Aorta (tissue), 5 donors: ENCODE measurements at regions of chr19 and their contacts with region 1.

Region 1: GRCh38 chr19:47663841-47664771 is 49.1 kb upstream of the EHD2 start:
- DNase-seq: peak in 1 of 2 donors; percentile 86
- ATAC-seq: peak; percentile 90
- H3K4me3 ChIP-seq: no peak overlapping the region
- H3K27ac ChIP-seq: peak overlapping the region; percentile 64 to 76
- H3K4me1 ChIP-seq: no peaks in the 10 kb centered on the region
- H3K27me3 ChIP-seq: no peaks in the 10 kb centered on the region

Region 2: GRCh38 chr19:47608074-47608918 is 55.8 kb before region 1 on chr19:
- intact Hi-C with region 1: loop called in 1 of 2 experiments (anchors 10 kb)
- DNase-seq: peak; percentile 96 to 98
- ATAC-seq: peak; percentile 96
- H3K4me3 ChIP-seq: peak overlapping the region; percentile 96 to 98
- H3K27ac ChIP-seq: peak overlapping the region; percentile 36 to 98
- H3K4me1 ChIP-seq: no peaks in the 10 kb centered on the region
- H3K27me3 ChIP-seq: no peaks in the 10 kb centered on the region

Region 3: GRCh38 chr19:47637550-47637949 is 26.6 kb before region 1 on chr19:
- intact Hi-C with region 1: no loop called
- DNase-seq: no peak
- ATAC-seq: no peak
- H3K4me3 ChIP-seq: no peak overlapping the region
- H3K27ac ChIP-seq: no peak overlapping the region
- H3K4me1 ChIP-seq: no peaks in the 10 kb centered on the region
- H3K27me3 ChIP-seq: no peaks in the 10 kb centered on the region